Activated naive CD4-positive, alpha-beta T cell treated with anti-CD3 and anti-CD28 coated beads for 36 hours (primary cell): ENCODE measurements at regions of chrX and their contacts with region 1.

Region 1: DNA sequence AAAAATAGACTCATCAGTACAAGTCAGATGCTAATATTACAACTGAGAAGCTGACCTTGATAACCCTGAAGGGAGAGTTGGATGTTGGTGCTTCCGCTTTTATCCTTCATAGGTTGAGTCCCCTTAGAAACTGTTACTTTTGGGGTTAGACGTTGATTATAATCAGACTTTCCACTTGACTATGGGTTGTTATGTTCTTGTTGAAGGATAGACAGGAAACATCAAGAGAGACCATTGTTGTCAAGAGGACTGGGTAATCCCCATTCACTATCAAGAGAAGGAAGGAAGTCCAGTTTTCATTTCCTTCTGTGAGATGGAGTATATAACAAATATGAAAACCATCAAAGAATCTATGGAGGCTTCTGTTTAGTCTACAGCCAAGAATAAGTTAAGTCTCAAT is 229.9 kb upstream of the AFF2 start:
- DNase-seq: no peak
- H3K4me3 Mint-ChIP-seq: no peak overlapping the region
- H3K27ac Mint-ChIP-seq: no peak overlapping the region
- H3K4me1 Mint-ChIP-seq: peaks cover 37% of the 10 kb centered on the region
- H3K27me3 Mint-ChIP-seq: no peaks in the 10 kb centered on the region

Region 2: DNA sequence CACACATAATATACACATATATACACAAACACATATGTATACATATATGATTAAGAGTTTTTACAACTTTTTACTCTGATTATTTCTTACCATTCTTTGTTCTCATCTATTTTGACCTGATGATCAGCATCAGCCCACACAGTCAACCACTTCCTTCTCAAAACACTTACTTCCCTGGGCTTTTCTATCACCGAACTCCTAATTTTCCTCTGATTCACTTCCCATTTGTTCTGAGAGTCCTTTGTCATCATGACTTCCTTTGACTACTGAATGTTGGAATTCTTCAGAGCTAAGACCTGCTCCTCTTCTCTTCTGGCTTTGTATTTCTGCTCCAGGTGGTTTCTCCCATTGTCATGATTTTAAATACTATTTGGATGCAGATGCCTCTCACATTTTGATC is 20.4 kb after region 1 on chrX:
- CTCF ChIA-PET with region 1: no interaction called
- intact Hi-C with region 1: no loop called
- DNase-seq: no peak
- H3K4me3 Mint-ChIP-seq: no peak overlapping the region
- H3K27ac Mint-ChIP-seq: no peak overlapping the region
- H3K4me1 Mint-ChIP-seq: peaks cover 25% of the 10 kb centered on the region
- H3K27me3 Mint-ChIP-seq: no peaks in the 10 kb centered on the region

Region 3: GRCh38 chrX:148310426-148311165 is 40.1 kb after region 1 on chrX:
- CTCF ChIA-PET with region 1: no interaction called
- intact Hi-C with region 1: loop called (anchors 5 kb)
- DNase-seq: peak; percentile 76
- H3K4me3 Mint-ChIP-seq: no peak overlapping the region
- H3K27ac Mint-ChIP-seq: peak overlapping the region; percentile 53
- H3K4me1 Mint-ChIP-seq: peaks cover 29% of the 10 kb centered on the region
- H3K27me3 Mint-ChIP-seq: no peaks in the 10 kb centered on the region

Region 4: GRCh38 chrX:148426467-148426866 is 156.0 kb after region 1 on chrX:
- CTCF ChIA-PET with region 1: no interaction called
- intact Hi-C with region 1: no loop called
- DNase-seq: no peak
- H3K4me3 Mint-ChIP-seq: no peak overlapping the region
- H3K27ac Mint-ChIP-seq: no peak overlapping the region
- H3K4me1 Mint-ChIP-seq: peaks cover 17% of the 10 kb centered on the region
- H3K27me3 Mint-ChIP-seq: no peaks in the 10 kb centered on the region

Region 5: GRCh38 chrX:148567229-148567628 is 296.7 kb after region 1 on chrX:
- CTCF ChIA-PET with region 1: no interaction called
- intact Hi-C with region 1: no loop called
- DNase-seq: no peak
- H3K4me3 Mint-ChIP-seq: no peak overlapping the region
- H3K27ac Mint-ChIP-seq: no peak overlapping the region
- H3K4me1 Mint-ChIP-seq: peaks cover 6% of the 10 kb centered on the region
- H3K27me3 Mint-ChIP-seq: no peaks in the 10 kb centered on the region